Activated CD4-positive, alpha-beta memory T cell treated with anti-CD3 and anti-CD28 coated beads, Interleukin-2, amount 10 ng/mL, durations not matched to agents 7 days and 5 days (primary cell): ENCODE measurements at regions of chr14 and their contacts with region 1.

Region 1: DNA sequence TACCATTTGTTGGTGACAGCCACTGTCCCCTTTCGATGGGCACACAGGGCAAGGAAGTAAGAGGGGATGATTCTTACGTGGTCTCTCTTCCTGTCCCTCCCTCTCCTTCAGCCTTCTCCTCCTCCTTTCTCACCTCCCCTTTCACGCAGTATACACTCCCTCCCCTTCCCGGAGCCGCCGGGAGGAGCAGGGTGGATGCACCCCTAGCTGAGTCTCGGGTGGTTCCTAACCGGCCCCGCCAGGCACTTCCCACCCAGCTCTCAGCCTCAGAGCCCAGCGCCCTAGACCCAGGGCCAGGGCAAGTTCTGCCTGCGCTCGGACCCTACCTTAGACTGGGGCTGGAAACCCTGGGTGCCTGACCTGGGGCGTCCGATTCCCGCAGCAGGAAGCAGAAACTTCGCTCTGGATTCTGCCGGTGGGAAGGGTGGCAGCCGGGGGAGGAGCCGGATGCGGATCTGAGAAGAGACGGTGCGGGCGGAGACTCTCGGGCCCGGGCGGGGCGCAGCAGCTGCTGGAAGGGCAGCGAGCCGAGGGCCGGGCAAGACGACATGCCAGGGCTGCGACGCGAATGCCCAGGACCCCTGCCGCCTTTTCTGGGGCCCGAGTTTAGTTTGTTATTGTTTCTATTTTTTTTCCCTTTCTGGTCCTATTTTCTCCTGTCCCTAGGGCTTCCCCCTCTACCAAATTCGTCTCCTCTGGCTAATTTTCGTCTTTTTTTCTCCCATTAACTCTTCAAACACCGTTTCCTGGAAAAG is at the start of gene TEP1:
- DNase-seq: peak; percentile 81
- H3K4me3 Mint-ChIP-seq: peak within 1 kb of the TSS; percentile 97
- H3K27ac Mint-ChIP-seq: peak within 1 kb of the TSS; percentile 98
- H3K4me1 Mint-ChIP-seq: peaks cover 47% of the 10 kb centered on the region
- H3K27me3 Mint-ChIP-seq: no peaks in the 10 kb centered on the region
- total RNA-seq, gene TEP1: 60.7 to 63.5 TPM

Region 2: GRCh38 chr14:20332788-20333493 is 80.3 kb before region 1 on chr14 and contains the start of gene CCNB1IP1:
- CTCF ChIA-PET with region 1: interaction called, 41 read pairs
- POLR2A ChIA-PET with region 1: interaction called, 3 read pairs
- DNase-seq: peak; percentile 52
- H3K4me3 Mint-ChIP-seq: peak within 1 kb of the TSS; percentile 99
- H3K27ac Mint-ChIP-seq: peak within 1 kb of the TSS; percentile 91
- H3K4me1 Mint-ChIP-seq: peaks cover 60% of the 10 kb centered on the region
- H3K27me3 Mint-ChIP-seq: peaks cover 4% of the 10 kb centered on the region
- total RNA-seq, gene CCNB1IP1: 39.3 to 43.4 TPM

Region 3: DNA sequence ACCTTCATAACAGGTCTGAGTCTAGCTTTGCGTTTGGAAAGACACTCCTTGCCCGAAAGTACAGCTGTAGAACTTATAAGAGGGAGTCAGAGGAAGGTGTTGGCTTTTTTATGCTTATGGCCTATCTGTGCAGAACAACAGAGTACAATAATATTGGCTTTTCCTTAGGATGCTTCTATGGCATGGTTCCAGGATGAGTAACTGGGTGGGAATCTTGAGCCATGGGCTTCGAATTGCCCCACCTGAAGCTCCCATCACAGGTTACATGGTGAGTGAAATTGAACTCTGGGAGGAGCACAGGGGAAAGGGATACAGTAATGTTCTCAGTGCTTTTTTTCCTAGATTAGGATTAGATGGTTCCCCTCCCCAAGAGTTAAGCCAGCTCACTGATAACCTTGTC is 56.8 kb before region 1 on chr14:
- CTCF ChIA-PET with region 1: no interaction called
- POLR2A ChIA-PET with region 1: no interaction called
- DNase-seq: no peak
- H3K4me3 Mint-ChIP-seq: no peak overlapping the region
- H3K27ac Mint-ChIP-seq: no peak overlapping the region
- H3K4me1 Mint-ChIP-seq: peaks cover 5% of the 10 kb centered on the region
- H3K27me3 Mint-ChIP-seq: no peaks in the 10 kb centered on the region

Region 4: DNA sequence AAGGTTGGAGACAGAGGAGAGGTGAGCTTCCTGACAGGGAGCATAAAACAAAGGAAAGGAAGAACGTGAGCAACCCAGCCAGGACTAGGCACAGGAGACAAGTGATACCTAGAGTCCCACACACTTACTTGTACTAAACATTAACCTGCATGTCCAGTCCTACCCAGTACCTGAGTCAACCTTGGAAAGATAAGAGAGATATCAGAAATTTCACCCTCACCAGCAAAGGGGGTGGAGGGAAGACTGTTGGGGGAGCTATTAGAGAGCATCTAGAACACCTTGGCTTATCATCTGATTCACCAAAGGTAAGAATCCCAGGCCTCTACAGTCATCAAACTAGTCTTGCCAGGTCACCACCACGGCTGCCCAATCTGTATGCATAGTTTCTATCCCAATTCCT is 11.6 kb after region 1 on chr14:
- CTCF ChIA-PET with region 1: interaction called, 28 read pairs
- POLR2A ChIA-PET with region 1: interaction called, 5 read pairs
- DNase-seq: no peak
- H3K4me3 Mint-ChIP-seq: no peak overlapping the region
- H3K27ac Mint-ChIP-seq: no peak overlapping the region
- H3K4me1 Mint-ChIP-seq: peaks cover 20% of the 10 kb centered on the region
- H3K27me3 Mint-ChIP-seq: peaks cover 3% of the 10 kb centered on the region

Region 5: DNA sequence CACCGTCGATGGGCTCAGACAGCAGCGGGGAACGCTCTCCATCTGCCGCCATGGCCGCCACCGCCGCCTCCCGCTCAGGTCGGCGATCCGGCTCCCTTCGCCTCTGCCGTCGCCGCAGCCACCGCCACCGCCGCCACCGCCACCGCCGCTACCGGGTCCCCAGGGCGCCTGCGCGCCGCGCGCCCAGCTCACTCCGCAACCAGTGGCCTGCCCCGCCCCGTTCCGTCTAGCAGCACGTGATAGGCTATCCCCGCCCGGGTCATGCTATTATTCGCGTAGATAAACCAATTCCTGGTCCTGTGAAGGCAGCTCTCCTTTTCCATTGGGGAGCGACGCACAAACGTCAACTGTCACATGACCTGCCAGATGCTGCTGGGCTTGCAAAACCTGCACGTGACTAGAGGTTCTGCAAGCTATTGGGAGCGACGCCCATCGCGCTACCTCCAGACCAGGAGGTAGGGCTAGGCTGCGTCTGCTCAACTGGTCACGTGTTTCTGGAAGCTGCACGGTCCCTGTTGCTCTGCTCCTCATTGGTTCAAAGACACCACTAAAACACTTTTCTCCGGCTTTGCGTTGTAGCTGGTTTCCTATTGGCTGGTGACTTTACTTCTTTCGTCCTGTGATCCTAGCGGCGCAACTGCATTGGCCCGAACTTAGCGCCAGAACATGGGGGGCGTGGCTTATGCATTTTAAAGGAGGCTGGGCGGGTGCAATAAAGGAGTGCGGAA is 48.2 kb after region 1 on chr14 and contains the start of gene PIP4P1:
- CTCF ChIA-PET with region 1: interaction called, 36 read pairs
- POLR2A ChIA-PET with region 1: interaction called, 41 read pairs
- DNase-seq: peak; percentile 98
- H3K4me3 Mint-ChIP-seq: peak within 1 kb of the TSS; percentile 97
- H3K27ac Mint-ChIP-seq: peak within 1 kb of the TSS; percentile 90
- H3K4me1 Mint-ChIP-seq: peaks cover 39% of the 10 kb centered on the region
- H3K27me3 Mint-ChIP-seq: no peaks in the 10 kb centered on the region
- total RNA-seq, gene PIP4P1: 39.5 to 42.9 TPM

Region 6: DNA sequence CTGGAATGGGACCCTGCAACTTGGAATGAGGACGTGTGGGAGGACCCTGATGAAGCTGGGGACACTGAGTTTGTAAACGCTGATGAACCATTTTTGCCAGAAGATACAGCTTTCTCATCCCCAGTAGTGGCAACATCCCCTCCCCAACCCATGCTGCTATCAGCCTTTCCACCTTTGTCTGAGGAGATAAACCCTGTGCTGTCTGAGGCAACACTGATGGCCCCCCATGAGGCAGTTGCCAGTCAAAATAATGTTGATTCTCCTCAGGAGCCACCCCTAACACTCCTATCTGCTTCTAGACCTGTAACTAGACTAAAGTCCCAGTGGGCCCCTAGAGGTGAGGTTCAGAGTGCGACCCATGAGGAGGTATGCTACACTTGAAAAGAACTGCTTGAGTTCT is 155.2 kb after region 1 on chr14:
- CTCF ChIA-PET with region 1: no interaction called
- POLR2A ChIA-PET with region 1: no interaction called
- DNase-seq: no peak
- H3K4me3 Mint-ChIP-seq: no peak overlapping the region
- H3K27ac Mint-ChIP-seq: no peak overlapping the region
- H3K4me1 Mint-ChIP-seq: no peaks in the 10 kb centered on the region
- H3K27me3 Mint-ChIP-seq: no peaks in the 10 kb centered on the region

Region 7: GRCh38 chr14:20613094-20614037 is 200.1 kb after region 1 on chr14:
- CTCF ChIA-PET with region 1: interaction called, 54 read pairs
- POLR2A ChIA-PET with region 1: interaction called, 4 read pairs
- DNase-seq: peak; percentile 86
- H3K4me3 Mint-ChIP-seq: no peak overlapping the region
- H3K27ac Mint-ChIP-seq: no peak overlapping the region
- H3K4me1 Mint-ChIP-seq: peaks cover 21% of the 10 kb centered on the region
- H3K27me3 Mint-ChIP-seq: peaks cover 3% of the 10 kb centered on the region